Aorta (tissue), 5 donors: ENCODE measurements at regions of chr16 and their contacts with region 1.

Region 1: DNA sequence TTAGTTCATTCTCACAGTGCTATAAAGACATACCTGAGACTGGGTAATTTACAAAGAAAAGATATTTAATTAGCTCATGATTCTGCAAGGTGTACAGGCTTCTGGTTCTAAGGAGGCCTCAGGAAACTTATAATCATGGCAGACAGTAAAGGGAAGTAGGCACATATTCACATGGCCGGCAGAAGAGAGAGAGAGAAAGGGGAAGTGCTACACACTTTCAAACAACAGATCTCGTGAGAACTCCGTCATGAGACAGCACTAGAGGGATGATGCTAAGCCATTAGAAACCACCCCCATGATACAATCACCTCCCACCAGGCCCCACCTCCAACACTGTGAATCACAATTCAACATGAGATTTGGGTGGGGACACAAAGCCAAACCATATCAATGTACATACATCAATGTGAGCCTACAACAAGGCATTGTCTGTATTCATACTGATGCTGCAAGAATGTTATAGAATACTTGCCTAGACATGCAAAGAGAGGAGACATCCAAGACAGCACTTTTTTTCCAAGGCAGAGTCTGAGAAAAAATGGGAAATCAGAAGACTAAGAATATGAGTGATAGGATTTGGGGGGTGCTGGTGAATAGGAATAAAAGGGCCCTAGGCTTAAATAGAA is 114.8 kb upstream of the XYLT1 start:
- DNase-seq: no peak
- ATAC-seq: no peak
- H3K4me3 ChIP-seq: no peak overlapping the region
- H3K27ac ChIP-seq: no peak overlapping the region
- H3K4me1 ChIP-seq: no peaks in the 10 kb centered on the region
- H3K27me3 ChIP-seq: peaks cover 0 to 5% of the 10 kb centered on the region in 2 donors

Region 2: DNA sequence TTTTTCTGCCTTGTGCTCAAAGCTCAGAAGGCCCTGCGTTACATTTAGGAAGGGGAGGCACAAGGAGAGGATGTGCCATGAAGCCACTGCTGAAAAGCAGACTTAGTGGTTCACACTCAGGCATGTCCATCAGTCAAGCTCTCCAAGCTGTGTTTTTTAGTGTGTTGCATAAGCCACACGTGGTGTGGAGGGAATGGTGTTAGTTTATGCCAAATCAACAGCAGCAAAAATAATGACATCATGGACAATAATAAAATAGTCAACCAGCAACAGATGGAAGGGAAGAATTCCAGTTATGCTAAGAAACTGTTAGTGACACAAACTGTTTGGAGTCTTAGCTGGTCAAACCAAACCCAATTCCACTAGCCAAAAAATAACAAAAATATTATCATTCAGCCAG is 768.4 kb before region 1 on chr16:
- intact Hi-C with region 1: no loop called
- DNase-seq: no peak
- ATAC-seq: no peak
- H3K4me3 ChIP-seq: no peak overlapping the region
- H3K27ac ChIP-seq: no peak overlapping the region
- H3K4me1 ChIP-seq: no peaks in the 10 kb centered on the region
- H3K27me3 ChIP-seq: no peaks in the 10 kb centered on the region

Region 3: DNA sequence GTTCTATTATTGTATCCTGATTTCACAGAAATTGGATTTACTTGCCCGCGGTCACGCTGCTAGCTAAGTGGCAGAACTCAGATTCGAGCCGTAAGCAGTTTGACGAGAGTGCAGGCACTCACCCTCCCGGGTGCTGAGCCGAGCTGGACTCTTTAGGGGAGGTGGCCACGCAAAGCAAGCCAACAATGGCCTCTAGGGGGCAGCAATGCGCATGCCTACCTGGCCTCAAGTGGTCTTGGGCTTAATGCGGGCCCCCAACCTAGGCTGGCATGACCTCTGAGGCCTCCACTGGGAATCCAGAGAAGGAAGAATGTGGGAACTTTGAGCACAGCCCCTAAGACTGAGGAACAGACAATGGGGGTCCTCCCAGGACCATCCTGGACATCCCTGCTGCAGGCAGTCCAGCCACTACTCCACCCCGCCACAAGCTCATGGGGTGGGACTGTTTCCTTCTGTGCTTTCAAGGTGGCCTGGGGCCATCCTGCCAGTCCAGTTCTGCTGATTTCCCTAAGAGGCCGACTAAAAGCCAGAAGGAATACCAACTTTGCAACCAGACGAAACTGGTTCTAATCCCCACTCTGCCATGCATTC is 391.3 kb before region 1 on chr16:
- intact Hi-C with region 1: loop called in 1 of 2 experiments (anchors 10 kb)
- DNase-seq: peak; percentile 73 to 87
- ATAC-seq: peak; percentile 77
- H3K4me3 ChIP-seq: no peak overlapping the region
- H3K27ac ChIP-seq: no peak overlapping the region
- H3K4me1 ChIP-seq: no peaks in the 10 kb centered on the region
- H3K27me3 ChIP-seq: no peaks in the 10 kb centered on the region